CD4-positive, alpha-beta memory T cell (primary cell): ENCODE measurements at regions of chr2 and their contacts with region 1.

Region 1: GRCh38 chr2:138658187-138658894 is 121.8 kb downstream of the NXPH2 start:
- DNase-seq: no peak
- H3K4me3 ChIP-seq: no peak overlapping the region
- H3K4me3 Mint-ChIP-seq: no peak overlapping the region
- H3K27ac ChIP-seq: no peak overlapping the region
- H3K27ac Mint-ChIP-seq: no peak overlapping the region
- H3K4me1 ChIP-seq: no peaks in the 10 kb centered on the region
- H3K4me1 Mint-ChIP-seq: no peaks in the 10 kb centered on the region
- H3K27me3 ChIP-seq: no peaks in the 10 kb centered on the region
- H3K27me3 Mint-ChIP-seq: peaks cover 1 to 5% of the 10 kb centered on the region in 2 donors

Region 2: DNA sequence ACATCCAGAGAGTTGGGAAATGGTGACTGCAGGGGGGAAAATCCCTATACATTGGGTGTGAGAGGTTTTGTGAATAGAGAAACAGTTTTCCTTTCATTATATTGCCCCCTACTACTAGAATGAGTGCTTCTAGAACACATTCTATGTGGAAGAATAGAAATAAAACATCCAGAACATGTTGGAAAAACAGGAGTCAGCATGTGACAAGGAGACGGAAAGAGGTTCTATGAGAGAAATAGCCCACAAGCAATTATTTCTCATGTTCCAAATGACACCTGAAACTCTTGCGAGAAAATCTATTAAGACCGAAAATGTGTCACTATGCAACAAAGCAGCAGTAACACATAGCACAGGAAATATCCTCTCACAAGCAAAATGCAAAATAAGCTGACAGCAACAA is 359.4 kb before region 1 on chr2:
- CTCF ChIA-PET with region 1: no interaction called
- POLR2A ChIA-PET with region 1: no interaction called
- intact Hi-C with region 1: loop called (anchors 5 kb)
- DNase-seq: no peak
- H3K4me3 ChIP-seq: no peak overlapping the region
- H3K4me3 Mint-ChIP-seq: no peak overlapping the region
- H3K27ac ChIP-seq: no peak overlapping the region
- H3K27ac Mint-ChIP-seq: no peak overlapping the region
- H3K4me1 ChIP-seq: no peaks in the 10 kb centered on the region
- H3K4me1 Mint-ChIP-seq: no peaks in the 10 kb centered on the region
- H3K27me3 ChIP-seq: no peaks in the 10 kb centered on the region
- H3K27me3 Mint-ChIP-seq: no peaks in the 10 kb centered on the region

Region 3: DNA sequence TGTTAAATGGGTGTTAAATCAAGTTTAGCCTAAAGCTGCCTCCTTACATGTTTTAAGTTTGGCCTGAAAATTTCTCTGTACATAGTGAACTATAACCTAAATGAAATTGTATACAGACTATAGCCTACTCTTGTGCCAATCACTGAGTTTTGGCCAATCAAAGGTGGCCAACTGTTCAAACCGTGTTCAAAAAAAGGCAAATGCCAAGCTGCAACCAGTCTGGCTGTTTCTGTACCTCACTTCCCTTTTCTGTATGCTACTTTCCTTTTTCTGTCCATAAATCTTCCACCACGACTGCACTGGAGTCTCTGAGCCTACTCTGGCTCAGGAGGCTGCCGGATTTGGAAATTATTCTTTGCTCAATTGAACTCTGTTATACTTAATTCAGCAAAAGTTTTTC is 35.7 kb before region 1 on chr2:
- CTCF ChIA-PET with region 1: no interaction called
- POLR2A ChIA-PET with region 1: no interaction called
- intact Hi-C with region 1: no loop called
- DNase-seq: no peak
- H3K4me3 ChIP-seq: no peak overlapping the region
- H3K4me3 Mint-ChIP-seq: no peak overlapping the region
- H3K27ac ChIP-seq: no peak overlapping the region
- H3K27ac Mint-ChIP-seq: no peak overlapping the region
- H3K4me1 ChIP-seq: no peaks in the 10 kb centered on the region
- H3K4me1 Mint-ChIP-seq: peaks cover 0 to 1% (median under 1%) of the 10 kb centered on the region in 4 donors
- H3K27me3 ChIP-seq: no peaks in the 10 kb centered on the region
- H3K27me3 Mint-ChIP-seq: peaks cover 6 to 14% of the 10 kb centered on the region in 2 donors